ENCODE measurements at regions of chr17 and their contacts with region 1.

Region 1: GRCh38 chr17:41024697-41025096 is 2.3 kb downstream of the KRTAP1-5 start:
- DNase-seq: no peak
- H3K4me3 ChIP-seq: no peak overlapping the region
- H3K27me3 ChIP-seq: no peaks in the 10 kb centered on the region
- CTCF ChIP-seq: no peak

Region 2: GRCh38 chr17:40450175-40450574 is 574.5 kb before region 1 on chr17:
- CTCF ChIA-PET with region 1: no interaction called
- POLR2A ChIA-PET with region 1: interaction called, 18 read pairs
- DNase-seq: no peak
- H3K4me3 ChIP-seq: no peak overlapping the region
- H3K27me3 ChIP-seq: no peaks in the 10 kb centered on the region
- CTCF ChIP-seq: peak; percentile 70

Region 3: GRCh38 chr17:40827746-40828453 is 196.8 kb before region 1 on chr17:
- CTCF ChIA-PET with region 1: no interaction called
- POLR2A ChIA-PET with region 1: no interaction called
- DNase-seq: no peak
- H3K4me3 ChIP-seq: no peak overlapping the region
- H3K27me3 ChIP-seq: no peaks in the 10 kb centered on the region
- CTCF ChIP-seq: no peak

Measured in BJ (cell line).